Activated B cell treated with CpG ODN at 0.5 μM for 24 hours (primary cell): ENCODE measurements at regions of chr12 and their contacts with region 1.

Region 1: GRCh38 chr12:46246021-46246700 is 22.7 kb downstream of the SLC38A1 start:
- DNase-seq: no peak
- ATAC-seq: no peak
- H3K4me3 Mint-ChIP-seq: peak overlapping the region; percentile 46
- H3K27ac Mint-ChIP-seq: peak overlapping the region; percentile 61
- H3K4me1 Mint-ChIP-seq: peaks cover 90% of the 10 kb centered on the region
- H3K27me3 Mint-ChIP-seq: no peaks in the 10 kb centered on the region
- CTCF ChIP-seq: no peak

Region 2: DNA sequence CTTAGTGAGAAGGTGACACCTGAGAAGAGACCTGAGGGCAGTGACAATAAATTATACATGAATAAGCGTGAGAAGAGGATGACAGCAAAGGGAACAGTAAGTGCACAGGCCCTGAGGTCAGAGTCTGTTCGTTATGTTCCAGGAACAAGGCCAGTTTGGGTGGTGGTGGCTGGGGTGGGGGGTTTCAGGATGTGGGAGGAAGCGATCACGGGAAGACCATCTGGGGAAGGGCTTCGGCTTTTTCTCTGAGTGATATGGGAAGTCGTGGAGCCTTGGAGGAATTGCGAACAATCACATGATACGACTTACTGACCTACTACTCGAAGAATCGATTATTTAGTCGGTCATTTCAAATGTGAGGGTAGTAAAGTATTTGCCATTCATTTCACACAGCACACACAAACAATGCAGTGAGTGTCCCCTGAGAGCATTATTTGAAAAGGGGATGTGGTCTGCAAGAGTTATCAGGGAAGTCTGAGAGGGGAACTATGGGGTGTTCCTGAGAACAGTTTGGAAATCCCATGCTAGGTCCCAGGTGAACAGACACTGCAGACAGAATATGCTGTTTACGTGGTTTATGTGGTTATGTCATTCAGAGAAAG is 72.0 kb before region 1 on chr12:
- CTCF ChIA-PET with region 1: no interaction called
- POLR2A ChIA-PET with region 1: no interaction called
- intact Hi-C with region 1: no loop called
- DNase-seq: no peak
- ATAC-seq: peak; percentile 69
- H3K4me3 Mint-ChIP-seq: peak overlapping the region; percentile 71
- H3K27ac Mint-ChIP-seq: peak overlapping the region; percentile 88
- H3K4me1 Mint-ChIP-seq: peaks cover 71% of the 10 kb centered on the region
- H3K27me3 Mint-ChIP-seq: no peaks in the 10 kb centered on the region
- CTCF ChIP-seq: no peak

Region 3: GRCh38 chr12:46260151-46260918 is 14.2 kb after region 1 on chr12:
- CTCF ChIA-PET with region 1: no interaction called
- POLR2A ChIA-PET with region 1: interaction called, 3 read pairs
- intact Hi-C with region 1: loop called (anchors 1 kb)
- DNase-seq: no peak
- ATAC-seq: no peak
- H3K4me3 Mint-ChIP-seq: no peak overlapping the region
- H3K27ac Mint-ChIP-seq: no peak overlapping the region
- H3K4me1 Mint-ChIP-seq: peaks cover 48% of the 10 kb centered on the region
- H3K27me3 Mint-ChIP-seq: no peaks in the 10 kb centered on the region
- CTCF ChIP-seq: no peak

Region 4: DNA sequence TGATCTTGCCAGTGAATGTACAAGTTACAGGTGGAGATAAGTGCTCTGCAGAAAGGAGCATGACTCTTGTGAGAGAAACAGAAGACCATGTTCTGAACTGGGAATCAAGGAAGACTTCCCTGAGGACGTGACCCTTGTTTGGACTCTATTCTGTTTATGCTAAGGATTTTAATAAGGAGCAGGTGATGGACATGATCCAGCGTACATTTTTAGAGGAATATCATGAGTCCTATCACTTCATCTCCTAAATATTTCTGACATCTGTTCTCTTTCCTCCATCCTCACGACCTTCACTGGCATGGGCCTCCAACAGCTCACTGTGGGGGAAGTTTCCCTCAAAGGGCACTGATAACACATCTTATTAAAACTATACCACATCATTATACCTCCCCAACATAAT is 30.6 kb after region 1 on chr12:
- CTCF ChIA-PET with region 1: no interaction called
- POLR2A ChIA-PET with region 1: no interaction called
- intact Hi-C with region 1: no loop called
- DNase-seq: no peak
- ATAC-seq: no peak
- H3K4me3 Mint-ChIP-seq: no peak overlapping the region
- H3K27ac Mint-ChIP-seq: no peak overlapping the region
- H3K4me1 Mint-ChIP-seq: peaks cover 1% of the 10 kb centered on the region
- H3K27me3 Mint-ChIP-seq: no peaks in the 10 kb centered on the region
- CTCF ChIP-seq: no peak